Ovary (tissue), 10 donors: ENCODE measurements at regions of chr12 and their contacts with region 1.

Region 1: GRCh38 chr12:85866986-85867776 is 6.9 kb upstream of the NTS start:
- DNase-seq: no peak
- H3K4me3 ChIP-seq: no peak overlapping the region
- H3K27ac ChIP-seq: no peak overlapping the region
- H3K4me1 ChIP-seq: no peaks in the 10 kb centered on the region
- H3K27me3 ChIP-seq: no peaks in the 10 kb centered on the region
- CTCF ChIP-seq: peak in 2 of 3 donors; percentile 55 to 67
- EP300 ChIP-seq: no peak
- POLR2A ChIP-seq: no peak

Region 2: GRCh38 chr12:85468356-85469157 is 398.6 kb before region 1 on chr12:
- intact Hi-C with region 1: loop called in 1 of 4 experiments (anchors 10 kb)
- DNase-seq: peak in 3 of 5 donors; percentile 10 to 25 (median 16)
- H3K4me3 ChIP-seq: peak overlapping the region; percentile 23
- H3K27ac ChIP-seq: no peak overlapping the region
- H3K4me1 ChIP-seq: no peaks in the 10 kb centered on the region
- H3K27me3 ChIP-seq: no peaks in the 10 kb centered on the region
- CTCF ChIP-seq: peak in 2 of 3 donors; percentile 41 to 59
- EP300 ChIP-seq: no peak
- POLR2A ChIP-seq: no peak

Region 3: GRCh38 chr12:85476756-85477155 is 390.4 kb before region 1 on chr12:
- intact Hi-C with region 1: loop called in 1 of 4 experiments (anchors 5 kb)
- DNase-seq: no peak
- H3K4me3 ChIP-seq: no peak overlapping the region
- H3K27ac ChIP-seq: no peak overlapping the region
- H3K4me1 ChIP-seq: no peaks in the 10 kb centered on the region
- H3K27me3 ChIP-seq: no peaks in the 10 kb centered on the region
- CTCF ChIP-seq: no peak
- EP300 ChIP-seq: no peak
- POLR2A ChIP-seq: no peak

Region 4: GRCh38 chr12:85575120-85576096 is 291.8 kb before region 1 on chr12:
- intact Hi-C with region 1: loop called (anchors 5 to 10 kb)
- DNase-seq: peak in 2 of 5 donors; percentile 21 to 47
- H3K4me3 ChIP-seq: no peak overlapping the region
- H3K27ac ChIP-seq: no peak overlapping the region
- H3K4me1 ChIP-seq: no peaks in the 10 kb centered on the region
- H3K27me3 ChIP-seq: no peaks in the 10 kb centered on the region
- CTCF ChIP-seq: peak in 2 of 3 donors; percentile 17 to 27
- EP300 ChIP-seq: no peak
- POLR2A ChIP-seq: no peak

Region 5: GRCh38 chr12:85821759-85822158 is 45.4 kb before region 1 on chr12:
- intact Hi-C with region 1: no loop called
- DNase-seq: no peak
- H3K4me3 ChIP-seq: no peak overlapping the region
- H3K27ac ChIP-seq: no peak overlapping the region
- H3K4me1 ChIP-seq: no peaks in the 10 kb centered on the region
- H3K27me3 ChIP-seq: no peaks in the 10 kb centered on the region
- CTCF ChIP-seq: no peak
- EP300 ChIP-seq: no peak
- POLR2A ChIP-seq: no peak

Region 6: GRCh38 chr12:85949253-85949652 is 82.1 kb after region 1 on chr12:
- intact Hi-C with region 1: no loop called
- DNase-seq: no peak
- H3K4me3 ChIP-seq: no peak overlapping the region
- H3K27ac ChIP-seq: no peak overlapping the region
- H3K4me1 ChIP-seq: no peaks in the 10 kb centered on the region
- H3K27me3 ChIP-seq: no peaks in the 10 kb centered on the region
- CTCF ChIP-seq: no peak
- EP300 ChIP-seq: no peak
- POLR2A ChIP-seq: no peak